Sigmoid colon (tissue), 7 donors: ENCODE measurements at regions of chr10 and their contacts with region 1.

Region 1: GRCh38 chr10:71850637-71851464 is at the start of gene PSAP:
- DNase-seq: peak; percentile 100
- H3K4me3 ChIP-seq: peak within 1 kb of the TSS; percentile 83 to 100 (median 98)
- H3K27ac ChIP-seq: peak within 1 kb of the TSS; percentile 92 to 99 (median 98)
- H3K4me1 ChIP-seq: peaks cover 0 to 50% (median 44%) of the 10 kb centered on the region in 4 donors
- H3K27me3 ChIP-seq: no peaks in the 10 kb centered on the region
- CTCF ChIP-seq: no peak
- EP300 ChIP-seq: peak in 1 of 4 donors; percentile 65
- POLR2A ChIP-seq: peak; percentile 96 to 99
- total RNA-seq, gene PSAP: 624 to 671 (median 644) TPM

Region 2: GRCh38 chr10:71766702-71767419 is 84.0 kb before region 1 on chr10:
- intact Hi-C with region 1: loop called (anchors 5 kb)
- DNase-seq: peak; percentile 89
- H3K4me3 ChIP-seq: no peak overlapping the region
- H3K27ac ChIP-seq: peak overlapping the region; percentile 89 to 98 (median 92)
- H3K4me1 ChIP-seq: peaks cover 0 to 99% (median 98%) of the 10 kb centered on the region in 4 donors
- H3K27me3 ChIP-seq: no peaks in the 10 kb centered on the region
- CTCF ChIP-seq: no peak
- EP300 ChIP-seq: peak in 1 of 4 donors; percentile 59
- POLR2A ChIP-seq: no peak